ENCODE measurements at regions of chr11 and their contacts with region 1.

Region 1: DNA sequence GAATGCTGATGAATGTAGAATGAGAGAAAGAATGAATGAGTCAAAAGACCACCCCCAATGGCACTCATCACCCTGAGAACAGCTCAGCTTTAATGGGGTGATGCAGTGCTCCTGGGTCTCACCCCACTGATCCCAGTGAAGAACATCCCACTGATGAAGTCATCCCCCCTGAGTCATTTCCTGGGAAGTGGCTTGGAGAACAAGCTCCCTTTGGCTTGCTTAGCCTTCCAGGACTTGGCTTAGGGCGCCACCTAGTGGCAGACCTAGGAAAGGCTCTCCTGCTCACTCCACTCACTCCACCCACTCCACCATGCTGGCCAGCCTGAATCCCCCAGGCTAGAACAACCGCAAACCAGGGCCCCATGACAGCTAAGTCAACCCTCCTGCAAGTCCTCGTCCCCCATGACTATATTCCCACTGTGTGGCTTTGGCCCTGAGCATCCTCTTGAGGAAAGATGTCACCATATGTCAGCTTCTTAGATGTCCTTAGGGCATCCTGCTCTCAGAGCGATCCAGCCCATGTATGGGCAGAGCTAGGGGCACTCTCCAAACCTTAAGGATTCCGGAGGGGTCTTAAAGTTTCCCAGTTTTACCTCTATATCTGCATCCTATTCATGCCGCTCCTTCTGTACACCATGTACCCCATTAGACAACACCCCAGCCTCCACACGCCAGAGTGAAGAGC is 17.8 kb upstream of the TMPRSS13 start:
- DNase-seq: peak; percentile 76 to 97 (median 92)

Region 2: DNA sequence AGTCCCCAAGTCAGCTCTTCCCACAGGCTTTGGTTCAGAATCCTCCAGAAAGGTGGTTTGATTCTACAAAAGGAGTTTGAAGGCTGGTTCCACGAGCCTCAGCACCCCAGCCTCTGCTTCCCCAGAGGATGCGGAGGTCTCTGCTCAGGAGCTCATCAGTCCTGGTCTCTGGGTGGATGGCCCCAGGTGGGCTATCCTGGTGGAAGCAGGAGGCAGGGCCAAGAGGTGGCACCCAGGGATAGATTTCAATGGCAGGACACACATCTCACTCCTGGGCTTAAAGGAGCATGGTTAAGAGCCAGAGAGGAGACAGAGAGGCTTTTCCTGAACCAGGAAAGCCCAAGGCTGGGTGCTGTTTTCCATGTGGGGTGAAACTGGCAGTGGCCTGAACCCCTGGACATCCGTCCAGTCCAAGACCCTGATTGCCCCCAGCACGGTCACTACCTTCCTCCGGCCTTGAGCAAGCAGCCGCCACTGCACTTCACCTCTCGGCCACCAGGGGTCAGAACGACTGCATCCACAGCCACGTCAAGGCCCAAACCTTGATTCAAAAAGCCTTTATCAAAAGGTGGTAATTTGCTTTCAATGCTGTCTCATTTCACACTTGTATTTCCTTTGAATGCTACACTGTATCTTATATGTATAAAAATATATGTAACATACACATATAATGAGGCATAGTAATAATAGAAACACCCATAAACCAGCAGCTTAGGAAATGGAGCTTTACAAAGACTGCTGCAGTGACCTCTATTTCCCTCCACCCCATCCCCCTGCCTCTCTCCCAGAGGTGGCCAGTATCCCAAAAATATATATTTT is 103.1 kb before region 1 on chr11:
- intact Hi-C with region 1: loop called (anchors 2 kb)
- DNase-seq: peak; percentile 52 to 95 (median 86)

Region 3: GRCh38 chr11:118117790-118118601 is 171.0 kb after region 1 on chr11:
- intact Hi-C with region 1: no loop called
- DNase-seq: peak in 1 of 42 donors; percentile 9

Measured in head of caudate nucleus (tissue), 42 donors.